CD8-positive, alpha-beta T cell (primary cell): ENCODE measurements at regions of chr2 and their contacts with region 1.

Region 1: DNA sequence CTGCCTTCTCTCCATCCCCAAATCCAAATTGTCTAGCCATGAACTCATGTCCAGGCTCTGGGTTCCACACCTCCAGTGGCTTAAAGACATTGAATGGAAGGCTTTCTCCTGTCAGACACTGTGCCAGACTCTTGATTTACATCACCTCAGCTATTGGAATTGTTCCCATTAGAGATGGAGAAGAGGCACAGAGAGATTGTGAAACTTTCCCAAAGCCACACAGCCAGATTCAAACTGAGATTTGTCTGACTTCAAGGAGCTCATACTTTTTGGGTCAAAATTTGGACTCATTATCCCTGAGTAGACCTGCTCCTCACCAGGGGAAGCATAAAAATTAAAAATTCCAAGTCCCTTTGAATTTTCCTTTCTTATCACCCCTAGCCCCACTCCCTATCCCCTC is 18.9 kb upstream of the MYO3B start:
- DNase-seq: no peak
- ATAC-seq: no peak
- H3K4me3 ChIP-seq: no peak overlapping the region
- H3K4me3 Mint-ChIP-seq: no peak overlapping the region
- H3K27ac ChIP-seq: no peak overlapping the region
- H3K27ac Mint-ChIP-seq: no peak overlapping the region
- H3K4me1 ChIP-seq: no peaks in the 10 kb centered on the region
- H3K4me1 Mint-ChIP-seq: no peaks in the 10 kb centered on the region
- H3K27me3 ChIP-seq: no peaks in the 10 kb centered on the region
- H3K27me3 Mint-ChIP-seq: peaks cover 15% of the 10 kb centered on the region
- CTCF ChIP-seq: no peak

Region 2: GRCh38 chr2:170227507-170227947 is 68.5 kb after region 1 on chr2:
- CTCF ChIA-PET with region 1: no interaction called
- POLR2A ChIA-PET with region 1: no interaction called
- intact Hi-C with region 1: loop called in 1 of 2 experiments (anchors 2 kb)
- DNase-seq: no peak
- ATAC-seq: no peak
- H3K4me3 ChIP-seq: no peak overlapping the region
- H3K4me3 Mint-ChIP-seq: no peak overlapping the region
- H3K27ac ChIP-seq: no peak overlapping the region
- H3K27ac Mint-ChIP-seq: no peak overlapping the region
- H3K4me1 ChIP-seq: no peaks in the 10 kb centered on the region
- H3K4me1 Mint-ChIP-seq: peaks cover 4% of the 10 kb centered on the region
- H3K27me3 ChIP-seq: no peaks in the 10 kb centered on the region
- H3K27me3 Mint-ChIP-seq: no peaks in the 10 kb centered on the region
- CTCF ChIP-seq: no peak